RWPE1 (cell line): ENCODE measurements at regions of chr17 and their contacts with region 1.

Region 1: GRCh38 chr17:14157822-14158221 is 78.8 kb downstream of the CDRT15 start:
- DNase-seq: no peak
- H3K27ac ChIP-seq: no peak overlapping the region
- CTCF ChIP-seq: no peak

Region 2: DNA sequence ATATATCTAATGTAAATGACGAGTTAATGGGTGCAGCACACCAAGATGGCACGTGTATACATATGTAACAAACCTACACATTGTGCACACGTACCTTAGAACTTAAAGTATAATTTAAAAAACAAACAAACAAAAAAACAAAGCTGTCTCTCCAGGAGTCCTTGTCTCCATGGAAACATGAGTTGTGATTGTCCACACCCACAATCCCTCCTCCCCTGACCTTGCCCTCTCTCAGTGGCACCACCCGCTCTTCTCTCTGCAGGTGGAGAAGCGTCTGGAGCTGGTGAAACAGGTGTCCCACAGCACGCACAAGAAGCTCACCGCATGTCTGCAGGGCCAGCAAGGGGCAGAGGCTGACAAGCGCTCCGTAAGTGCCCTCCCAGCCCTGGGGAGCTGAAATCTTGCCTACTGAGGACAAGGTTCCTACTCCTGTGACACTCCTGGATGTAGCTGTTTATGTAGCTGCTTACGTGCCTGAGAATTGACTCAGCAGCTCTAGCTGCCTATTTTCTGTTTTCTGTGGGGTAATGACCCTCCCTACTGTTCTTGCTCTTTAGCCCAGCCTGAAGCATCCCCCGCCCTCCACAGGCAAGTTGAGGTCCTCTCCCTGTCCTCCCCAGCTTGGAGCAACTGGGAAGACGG is 1261.6 kb before region 1 on chr17:
- CTCF ChIA-PET with region 1: interaction called, 10 read pairs
- POLR2A ChIA-PET with region 1: no interaction called
- DNase-seq: no peak
- H3K27ac ChIP-seq: no peak overlapping the region
- CTCF ChIP-seq: no peak

Region 3: DNA sequence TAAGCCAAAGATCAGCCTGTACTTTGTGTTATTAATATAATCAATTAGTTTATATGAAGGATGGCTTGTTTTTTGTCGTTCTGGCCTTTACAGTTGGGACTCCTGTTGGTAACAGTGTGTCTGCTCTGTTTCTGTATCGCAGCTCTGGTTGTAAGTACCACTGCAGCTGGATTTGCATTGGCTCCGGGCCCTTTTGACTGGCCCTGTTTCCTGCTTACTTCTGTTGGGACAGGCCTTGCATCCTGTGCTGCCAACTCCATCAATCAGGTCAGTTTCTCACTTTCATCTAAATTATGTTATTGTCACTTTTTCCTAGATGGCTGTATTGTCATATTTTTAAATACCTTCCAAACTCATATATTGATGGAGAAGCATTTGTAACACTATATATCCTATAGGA is 55.8 kb before region 1 on chr17:
- CTCF ChIA-PET with region 1: no interaction called
- POLR2A ChIA-PET with region 1: no interaction called
- DNase-seq: no peak
- H3K27ac ChIP-seq: no peak overlapping the region
- CTCF ChIP-seq: no peak

Region 4: GRCh38 chr17:14168582-14168981 is 10.8 kb after region 1 on chr17:
- CTCF ChIA-PET with region 1: no interaction called
- POLR2A ChIA-PET with region 1: no interaction called
- DNase-seq: no peak
- H3K27ac ChIP-seq: no peak overlapping the region
- CTCF ChIP-seq: no peak